Ascending aorta (tissue), 2 donors: ENCODE measurements at regions of chr10 and their contacts with region 1.

Region 1: DNA sequence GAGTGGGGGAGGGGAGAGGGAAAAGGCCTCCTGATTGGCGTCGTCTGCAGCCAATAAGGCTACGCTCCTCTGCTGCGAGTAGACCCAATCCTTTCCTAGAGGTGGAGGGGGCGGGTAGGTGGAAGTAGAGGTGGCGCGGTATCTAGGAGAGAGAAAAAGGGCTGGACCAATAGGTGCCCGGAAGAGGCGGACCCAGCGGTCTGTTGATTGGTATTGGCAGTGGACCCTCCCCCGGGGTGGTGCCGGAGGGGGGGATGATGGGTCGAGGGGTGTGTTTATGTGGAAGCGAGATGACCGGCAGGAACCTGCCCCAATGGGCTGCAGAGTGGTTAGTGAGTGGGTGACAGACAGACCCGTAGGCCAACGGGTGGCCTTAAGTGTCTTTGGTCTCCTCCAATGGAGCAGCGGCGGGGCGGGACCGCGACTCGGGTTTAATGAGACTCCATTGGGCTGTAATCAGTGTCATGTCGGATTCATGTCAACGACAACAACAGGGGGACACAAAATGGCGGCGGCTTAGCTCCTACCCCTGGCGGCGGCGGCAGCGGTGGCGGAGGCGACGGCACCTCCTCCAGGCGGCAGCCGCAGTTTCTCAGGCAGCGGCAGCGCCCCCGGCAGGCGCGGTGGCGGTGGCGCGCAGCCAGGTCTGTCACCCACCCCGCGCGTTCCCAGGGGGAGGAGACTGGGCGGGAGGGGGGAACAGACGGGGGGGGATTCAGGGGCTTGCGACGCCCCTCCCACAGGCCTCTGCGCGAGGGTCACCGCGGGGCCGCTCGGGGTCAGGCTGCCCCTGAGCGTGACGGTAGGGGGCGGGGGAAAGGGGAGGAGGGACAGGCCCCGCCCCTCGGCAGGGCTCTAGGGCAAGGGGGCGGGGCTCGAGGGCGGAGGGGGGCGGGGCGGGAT is at the start of gene KAT6B:
- DNase-seq: peak; percentile 100
- H3K4me3 ChIP-seq: peak within 1 kb of the TSS; percentile 93 to 95
- H3K27ac ChIP-seq: peak within 1 kb of the TSS; percentile 98 to 99
- H3K4me1 ChIP-seq: peaks cover 14 to 36% of the 10 kb centered on the region in 2 donors
- H3K27me3 ChIP-seq: no peaks in the 10 kb centered on the region
- CTCF ChIP-seq: peak in 2 of 3 experiments; percentile 15 to 22
- total RNA-seq, gene KAT6B: 41.1 TPM

Region 2: GRCh38 chr10:74293686-74294371 is 532.6 kb before region 1 on chr10:
- intact Hi-C with region 1: loop called (anchors 5 kb)
- DNase-seq: no peak
- H3K4me3 ChIP-seq: no peak overlapping the region
- H3K27ac ChIP-seq: peak overlapping the region; percentile 76 to 83
- H3K4me1 ChIP-seq: peaks cover 3 to 13% of the 10 kb centered on the region in 2 donors
- H3K27me3 ChIP-seq: no peaks in the 10 kb centered on the region
- CTCF ChIP-seq: no peak

Region 3: GRCh38 chr10:74529205-74529604 is 297.2 kb before region 1 on chr10:
- intact Hi-C with region 1: no loop called
- DNase-seq: no peak
- H3K4me3 ChIP-seq: no peak overlapping the region
- H3K27ac ChIP-seq: no peak overlapping the region
- H3K4me1 ChIP-seq: no peaks in the 10 kb centered on the region
- H3K27me3 ChIP-seq: no peaks in the 10 kb centered on the region
- CTCF ChIP-seq: no peak

Region 4: GRCh38 chr10:74924251-74924951 is 98.0 kb after region 1 on chr10:
- intact Hi-C with region 1: loop called (anchors 2 kb)
- DNase-seq: no peak
- H3K4me3 ChIP-seq: peak overlapping the region; percentile 11 to 23
- H3K27ac ChIP-seq: peak overlapping the region; percentile 67 to 78
- H3K4me1 ChIP-seq: peaks cover 6 to 37% of the 10 kb centered on the region in 2 donors
- H3K27me3 ChIP-seq: no peaks in the 10 kb centered on the region
- CTCF ChIP-seq: no peak